ENCODE measurements at regions of chr18 and their contacts with region 1.

Region 1: GRCh38 chr18:79528846-79529245 is 133.1 kb downstream of the NFATC1 start:
- DNase-seq: no peak
- ATAC-seq: peak; percentile 19 to 68
- H3K4me3 ChIP-seq: no peak overlapping the region
- H3K27ac ChIP-seq: no peak overlapping the region
- H3K4me1 ChIP-seq: peaks cover 7 to 13% of the 10 kb centered on the region in 2 donors
- H3K27me3 ChIP-seq: no peaks in the 10 kb centered on the region
- CTCF ChIP-seq: peak; percentile 80 to 93 (median 84)
- POLR2A ChIP-seq: no peak

Region 2: GRCh38 chr18:79378542-79379250 is 150.2 kb before region 1 on chr18:
- in situ Hi-C with region 1: loop called (anchors 10 kb)
- intact Hi-C with region 1: loop called (anchors 1 kb)
- DNase-seq: peak in 1 of 2 donors; percentile 68
- ATAC-seq: peak; percentile 69 to 72
- H3K4me3 ChIP-seq: no peak overlapping the region
- H3K27ac ChIP-seq: no peak overlapping the region
- H3K4me1 ChIP-seq: peaks cover 0 to 3% of the 10 kb centered on the region in 2 donors
- H3K27me3 ChIP-seq: no peaks in the 10 kb centered on the region
- CTCF ChIP-seq: peak; percentile 83 to 97 (median 95)
- POLR2A ChIP-seq: no peak

Region 3: DNA sequence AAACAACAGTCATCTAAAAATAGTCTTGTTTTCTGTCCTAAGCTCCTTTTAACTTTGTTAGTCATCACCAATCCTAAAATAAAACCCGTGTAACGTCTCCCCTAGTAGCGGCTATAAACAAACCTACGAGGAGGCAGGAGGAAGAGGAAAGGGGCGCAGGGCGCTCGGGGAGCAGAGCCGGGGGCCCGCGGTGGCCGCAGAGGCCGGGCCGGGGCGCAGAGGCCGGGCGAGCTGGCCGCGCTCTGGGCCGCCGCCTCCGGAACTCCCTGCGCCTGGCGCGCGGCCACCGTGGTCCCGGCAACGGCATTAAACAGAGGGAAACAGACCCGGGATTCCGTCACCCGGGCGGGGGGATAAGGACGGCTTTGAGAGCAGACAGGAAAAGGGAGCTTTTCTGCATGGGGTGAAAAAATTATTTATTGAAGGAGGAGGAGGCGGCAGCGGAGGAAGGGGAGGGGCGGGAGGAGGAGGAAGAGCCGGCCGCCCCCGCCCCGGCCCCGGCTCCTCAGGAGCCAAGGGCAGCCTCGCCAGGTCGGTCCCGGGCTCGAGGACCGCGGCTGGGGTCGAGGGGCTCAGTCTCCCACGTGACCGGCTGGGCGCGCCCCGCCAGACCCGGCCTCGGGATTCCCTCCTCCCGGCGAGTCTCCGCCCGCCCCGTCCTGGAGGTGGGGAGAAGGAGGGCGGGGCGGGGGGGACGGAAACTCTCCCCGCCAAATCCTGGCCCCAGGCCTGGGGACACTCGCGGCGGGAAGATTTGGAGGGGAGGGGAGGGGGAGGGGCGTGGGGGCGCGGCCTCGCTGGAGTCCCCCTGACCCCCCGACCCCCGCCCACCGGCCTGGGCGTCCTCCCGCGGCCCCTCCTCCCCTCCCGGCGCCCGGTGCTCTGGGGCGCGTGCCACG is 135.0 kb before region 1 on chr18:
- in situ Hi-C with region 1: no loop called
- intact Hi-C with region 1: loop called (anchors 5 kb)
- DNase-seq: peak; percentile 57 to 77
- ATAC-seq: peak; percentile 72 to 75
- H3K4me3 ChIP-seq: peak overlapping the region; percentile 65 to 76 (median 68)
- H3K27ac ChIP-seq: peak overlapping the region; percentile 93 to 97 (median 96)
- H3K4me1 ChIP-seq: peaks cover 19 to 22% of the 10 kb centered on the region in 2 donors
- H3K27me3 ChIP-seq: no peaks in the 10 kb centered on the region
- CTCF ChIP-seq: no peak
- POLR2A ChIP-seq: peak; percentile 79 to 94

Region 4: GRCh38 chr18:79507076-79507545 is 21.7 kb before region 1 on chr18:
- in situ Hi-C with region 1: no loop called
- intact Hi-C with region 1: no loop called
- DNase-seq: peak; percentile 52 to 66
- ATAC-seq: peak; percentile 79 to 85
- H3K4me3 ChIP-seq: peak overlapping the region; percentile 49 to 65 (median 54)
- H3K27ac ChIP-seq: peak overlapping the region; percentile 88 to 90 (median 90)
- H3K4me1 ChIP-seq: peaks cover 23 to 32% of the 10 kb centered on the region in 2 donors
- H3K27me3 ChIP-seq: no peaks in the 10 kb centered on the region
- CTCF ChIP-seq: no peak
- POLR2A ChIP-seq: no peak

Region 5: GRCh38 chr18:79644006-79644665 is 115.3 kb after region 1 on chr18:
- in situ Hi-C with region 1: loop called in 2 of 4 experiments (anchors 10 to 25 kb)
- intact Hi-C with region 1: loop called (anchors 10 kb)
- DNase-seq: peak in 1 of 2 donors; percentile 26
- ATAC-seq: peak; percentile 44 to 65
- H3K4me3 ChIP-seq: no peak overlapping the region
- H3K27ac ChIP-seq: no peak overlapping the region
- H3K4me1 ChIP-seq: peaks cover 0 to 4% of the 10 kb centered on the region in 2 donors
- H3K27me3 ChIP-seq: no peaks in the 10 kb centered on the region
- CTCF ChIP-seq: peak; percentile 83 to 97 (median 91)
- POLR2A ChIP-seq: no peak